MCF 10A (cell line): ENCODE measurements at regions of chr9 and their contacts with region 1.

Region 1: DNA sequence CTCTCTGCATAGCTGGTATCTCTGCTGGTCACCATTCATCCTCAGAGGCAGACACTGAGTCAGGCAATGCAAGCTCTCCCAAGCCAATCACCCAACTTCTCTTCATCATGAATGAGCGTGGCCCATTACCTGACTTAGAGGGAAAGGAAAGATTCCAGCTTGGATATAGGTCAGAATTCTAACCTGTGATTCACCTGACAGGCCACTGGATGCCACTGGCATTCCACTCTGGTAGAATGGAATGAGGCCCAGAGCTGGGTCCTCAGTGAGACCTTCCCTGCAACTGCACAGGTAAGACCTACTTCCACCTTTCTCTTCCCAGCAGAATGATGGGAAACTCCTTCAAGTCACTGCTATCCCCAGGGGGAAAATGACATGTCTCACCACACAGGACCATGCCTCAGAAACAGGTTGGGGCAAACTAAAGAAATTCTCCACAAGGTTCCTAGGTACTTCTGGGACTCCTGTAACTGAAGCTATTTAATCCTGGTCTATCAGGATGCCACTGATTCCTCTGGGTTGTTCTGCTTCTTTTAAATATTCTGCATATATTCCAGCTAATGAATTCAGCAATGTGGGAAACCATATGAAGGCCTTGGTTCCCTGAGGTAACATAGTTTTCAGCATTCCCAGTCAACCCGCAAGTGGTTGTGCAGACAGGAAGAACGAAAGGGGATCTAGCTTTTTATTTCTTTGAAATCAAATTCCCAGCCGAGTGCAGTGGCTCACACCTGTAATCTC is 62.0 kb downstream of the SUSD1 start:
- DNase-seq: peak; percentile 76
- H3K4me3 Mint-ChIP-seq: no peak overlapping the region
- H3K27ac Mint-ChIP-seq: peak overlapping the region; percentile 78
- H3K4me1 Mint-ChIP-seq: peaks cover 23% of the 10 kb centered on the region
- H3K27me3 Mint-ChIP-seq: no peaks in the 10 kb centered on the region
- CTCF ChIP-seq: peak; percentile 85

Region 2: DNA sequence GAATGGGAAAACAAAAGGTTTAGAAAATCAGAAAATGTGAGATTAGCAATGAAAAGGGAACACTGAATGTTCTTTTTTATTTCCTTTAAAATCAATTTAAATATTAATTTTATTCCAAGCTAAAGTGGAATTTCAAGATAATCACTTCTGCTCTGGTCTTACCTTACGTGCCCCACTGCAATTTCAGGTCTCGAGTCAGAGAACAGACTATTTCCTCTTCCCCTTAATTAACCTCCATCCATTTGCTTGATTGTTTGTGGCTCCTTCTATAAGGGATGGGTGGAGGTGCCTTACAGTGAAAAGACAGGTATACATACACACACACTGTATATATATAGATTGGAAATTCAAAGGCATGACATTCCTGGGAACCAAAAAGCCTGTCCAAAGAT is 75.1 kb before region 1 on chr9:
- CTCF ChIA-PET with region 1: no interaction called
- POLR2A ChIA-PET with region 1: no interaction called
- intact Hi-C with region 1: no loop called
- DNase-seq: no peak
- H3K4me3 Mint-ChIP-seq: no peak overlapping the region
- H3K27ac Mint-ChIP-seq: no peak overlapping the region
- H3K4me1 Mint-ChIP-seq: peaks cover 26% of the 10 kb centered on the region
- H3K27me3 Mint-ChIP-seq: no peaks in the 10 kb centered on the region
- CTCF ChIP-seq: no peak

Region 3: DNA sequence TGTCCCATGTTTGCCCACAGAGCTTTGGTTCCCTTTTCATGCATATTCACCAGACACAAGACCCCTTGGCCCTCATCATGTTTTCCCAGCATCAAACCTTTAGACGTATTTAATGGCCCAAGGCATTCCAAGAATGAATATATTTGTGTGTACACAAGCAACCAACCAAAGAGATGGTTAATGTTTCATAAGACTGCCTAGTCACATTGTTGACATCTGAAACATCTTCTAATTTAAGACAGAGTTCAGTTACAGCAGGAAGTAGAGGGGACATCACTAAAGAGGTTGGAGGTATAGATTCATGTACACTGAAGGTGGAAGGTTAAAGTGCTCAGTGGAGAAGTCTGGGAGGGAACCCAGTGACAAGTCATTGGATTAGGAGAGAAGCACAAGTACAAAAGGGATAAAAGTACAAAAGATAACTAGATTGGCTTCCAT is 12.9 kb after region 1 on chr9:
- CTCF ChIA-PET with region 1: interaction called, 18 read pairs
- POLR2A ChIA-PET with region 1: no interaction called
- intact Hi-C with region 1: no loop called
- DNase-seq: no peak
- H3K4me3 Mint-ChIP-seq: no peak overlapping the region
- H3K27ac Mint-ChIP-seq: no peak overlapping the region
- H3K4me1 Mint-ChIP-seq: no peaks in the 10 kb centered on the region
- H3K27me3 Mint-ChIP-seq: no peaks in the 10 kb centered on the region
- CTCF ChIP-seq: no peak

Region 4: DNA sequence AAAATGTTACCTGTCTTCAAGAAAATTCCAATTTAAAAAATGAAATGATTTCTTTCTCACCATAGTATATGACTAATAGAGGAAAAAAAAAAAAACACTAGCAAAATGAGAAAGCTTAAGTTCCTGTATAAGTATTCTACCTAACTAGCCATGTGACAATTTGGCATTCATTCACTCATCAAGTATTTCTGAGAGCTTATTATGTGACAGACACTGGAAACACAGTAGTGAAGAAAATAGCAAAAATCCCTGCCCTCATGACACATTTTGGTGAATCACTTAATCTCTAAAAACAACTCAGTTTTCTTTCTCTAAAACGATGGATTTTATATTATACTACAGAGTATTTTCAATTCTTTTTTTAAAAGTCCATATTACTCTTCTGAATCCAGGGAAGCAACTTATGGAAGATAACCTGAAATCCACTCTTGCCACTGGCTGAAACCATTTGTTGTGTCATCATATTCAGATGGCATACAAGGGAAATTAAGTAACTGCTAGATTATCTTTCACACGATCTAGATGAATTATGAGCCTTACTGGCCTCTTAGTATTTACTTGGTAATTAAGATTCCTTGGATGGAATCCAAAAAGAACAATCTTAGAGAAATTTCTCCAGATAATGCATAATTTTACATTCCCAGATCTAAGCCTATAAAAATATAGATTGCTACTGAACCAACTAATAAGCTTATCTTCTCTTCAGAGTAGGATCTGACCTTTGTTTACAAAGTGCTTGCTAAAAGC is 214.8 kb after region 1 on chr9:
- CTCF ChIA-PET with region 1: interaction called, 15 read pairs
- POLR2A ChIA-PET with region 1: interaction called, 34 read pairs
- intact Hi-C with region 1: no loop called
- DNase-seq: peak; percentile 36
- H3K4me3 Mint-ChIP-seq: no peak overlapping the region
- H3K27ac Mint-ChIP-seq: peak overlapping the region; percentile 81
- H3K4me1 Mint-ChIP-seq: peaks cover 36% of the 10 kb centered on the region
- H3K27me3 Mint-ChIP-seq: no peaks in the 10 kb centered on the region
- CTCF ChIP-seq: no peak

Region 5: GRCh38 chr9:112355427-112355897 is 242.4 kb after region 1 on chr9:
- CTCF ChIA-PET with region 1: interaction called, 110 read pairs
- POLR2A ChIA-PET with region 1: interaction called, 33 read pairs
- intact Hi-C with region 1: no loop called
- DNase-seq: no peak
- H3K4me3 Mint-ChIP-seq: no peak overlapping the region
- H3K27ac Mint-ChIP-seq: no peak overlapping the region
- H3K4me1 Mint-ChIP-seq: peaks cover 9% of the 10 kb centered on the region
- H3K27me3 Mint-ChIP-seq: no peaks in the 10 kb centered on the region
- CTCF ChIP-seq: no peak

Region 6: GRCh38 chr9:112665347-112665746 is 552.2 kb after region 1 on chr9:
- CTCF ChIA-PET with region 1: interaction called, 3 read pairs
- POLR2A ChIA-PET with region 1: no interaction called
- intact Hi-C with region 1: loop called (anchors 1 kb)
- DNase-seq: peak; percentile 31
- H3K4me3 Mint-ChIP-seq: no peak overlapping the region
- H3K27ac Mint-ChIP-seq: no peak overlapping the region
- H3K4me1 Mint-ChIP-seq: no peaks in the 10 kb centered on the region
- H3K27me3 Mint-ChIP-seq: no peaks in the 10 kb centered on the region
- CTCF ChIP-seq: peak; percentile 36